Natural killer cell (primary cell): ENCODE measurements at regions of chr20 and their contacts with region 1.

Region 1: DNA sequence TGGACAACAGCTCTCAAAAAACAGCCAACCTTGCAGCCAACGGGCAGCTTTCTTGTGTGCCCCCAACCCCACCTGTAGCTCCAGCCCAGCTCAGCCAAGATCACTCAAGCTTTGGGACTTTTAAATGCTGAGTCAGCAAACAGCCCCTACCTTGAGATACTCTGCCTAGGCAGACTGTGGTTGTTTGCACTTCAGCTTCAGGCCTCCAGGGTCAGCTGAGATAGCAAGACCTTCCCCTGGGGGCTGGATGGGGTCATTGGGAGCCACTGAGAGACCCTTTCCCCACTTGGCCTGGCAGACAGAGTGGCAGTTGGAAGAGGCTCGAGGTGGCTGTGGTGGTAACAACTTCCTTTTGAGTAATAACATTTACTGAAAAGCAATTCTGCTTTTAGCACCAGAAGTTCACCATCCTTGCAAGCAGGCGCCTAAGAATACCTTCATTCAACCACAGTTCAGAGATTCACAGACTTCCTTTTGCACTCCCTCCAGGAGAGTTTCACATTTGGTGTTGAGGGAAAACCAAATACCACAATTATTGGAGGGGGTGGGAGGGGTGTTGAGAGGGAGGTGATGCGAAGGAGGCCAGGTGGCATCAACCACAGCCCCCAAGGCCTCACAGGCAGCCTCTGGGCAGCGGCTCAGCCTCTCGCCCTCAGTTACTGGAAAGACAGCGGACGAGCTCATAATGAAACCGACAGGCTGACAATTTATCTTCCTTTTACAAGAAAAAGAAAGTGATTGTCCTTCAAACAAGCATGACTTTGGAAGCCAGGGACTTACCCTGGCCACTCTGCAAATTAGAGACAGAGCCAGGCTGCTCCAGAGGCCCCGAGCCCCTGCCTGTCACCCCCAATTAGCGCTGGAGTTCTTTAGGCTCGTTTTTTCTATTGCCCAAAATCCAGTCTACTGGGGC is 148.1 kb downstream of the CEBPB start:
- DNase-seq: peak; percentile 43 to 53
- ATAC-seq: peak; percentile 70 to 81 (median 75)
- H3K4me3 ChIP-seq: no peak overlapping the region
- H3K4me3 Mint-ChIP-seq: peak overlapping the region; percentile 65
- H3K27ac ChIP-seq: peak overlapping the region; percentile 14
- H3K27ac Mint-ChIP-seq: peak overlapping the region; percentile 77 to 81
- H3K4me1 ChIP-seq: peaks cover 41% of the 10 kb centered on the region
- H3K4me1 Mint-ChIP-seq: peaks cover 27 to 40% of the 10 kb centered on the region in 2 donors
- H3K27me3 ChIP-seq: no peaks in the 10 kb centered on the region
- H3K27me3 Mint-ChIP-seq: peaks cover 0 to 31% of the 10 kb centered on the region in 2 donors
- CTCF ChIP-seq: no peak

Region 2: GRCh38 chr20:50460460-50461267 is 121.9 kb after region 1 on chr20:
- intact Hi-C with region 1: loop called (anchors 5 kb)
- DNase-seq: peak; percentile 85 to 86
- ATAC-seq: peak; percentile 93 to 94 (median 93)
- H3K4me3 ChIP-seq: no peak overlapping the region
- H3K4me3 Mint-ChIP-seq: no peak overlapping the region
- H3K27ac ChIP-seq: no peak overlapping the region
- H3K27ac Mint-ChIP-seq: no peak overlapping the region
- H3K4me1 ChIP-seq: peaks cover 24% of the 10 kb centered on the region
- H3K4me1 Mint-ChIP-seq: peaks cover 4 to 15% of the 10 kb centered on the region in 2 donors
- H3K27me3 ChIP-seq: peaks cover 22% of the 10 kb centered on the region
- H3K27me3 Mint-ChIP-seq: peaks cover 22 to 33% of the 10 kb centered on the region in 2 donors
- CTCF ChIP-seq: peak; percentile 98